ENCODE measurements at regions of chr20 and their contacts with region 1.

Region 1: GRCh38 chr20:10412591-10413408 is 21.2 kb downstream of the MKKS start:
- DNase-seq: peak; percentile 43 to 55
- ATAC-seq: peak; percentile 69 to 82; a peak in 5 of 6 replicates
- H3K4me3 ChIP-seq: no peak overlapping the region
- H3K27ac ChIP-seq: peak overlapping the region; percentile 63 to 82
- H3K4me1 ChIP-seq: peaks cover 83% of the 10 kb centered on the region
- CTCF ChIP-seq: peak; percentile 78
- EP300 ChIP-seq: no peak
- POLR2A ChIP-seq: no peak
- RAD21 ChIP-seq: peak; percentile 69 to 76

Region 2: GRCh38 chr20:10306440-10307358 is 106.1 kb before region 1 on chr20:
- CTCF ChIA-PET with region 1: interaction called, 10 read pairs
- POLR2A ChIA-PET with region 1: no interaction called
- DNase-seq: no peak
- ATAC-seq: peak in 1 of 2 experiments; percentile 56; a peak in 3 of 6 replicates
- H3K4me3 ChIP-seq: no peak overlapping the region
- H3K27ac ChIP-seq: peak overlapping the region; percentile 76 to 83
- H3K4me1 ChIP-seq: peaks cover 81% of the 10 kb centered on the region
- CTCF ChIP-seq: no peak
- EP300 ChIP-seq: peak; percentile 50 to 64; a peak in 2 of 5 replicates
- POLR2A ChIP-seq: no peak
- RAD21 ChIP-seq: 0 out of 5 replicates have a peak, but pooled peaks of 1 of the 2 experiments have one; percentile 18

Region 3: GRCh38 chr20:10369723-10370090 is 43.1 kb before region 1 on chr20:
- CTCF ChIA-PET with region 1: interaction called, 14 read pairs
- POLR2A ChIA-PET with region 1: interaction called, 8 read pairs
- DNase-seq: peak; percentile 82 to 95
- ATAC-seq: peak; percentile 90 to 95
- H3K4me3 ChIP-seq: no peak overlapping the region
- H3K27ac ChIP-seq: peak overlapping the region; percentile 90 to 93
- H3K4me1 ChIP-seq: peaks cover 55% of the 10 kb centered on the region
- CTCF ChIP-seq: no peak
- EP300 ChIP-seq: peak; percentile 83 to 90; a peak in 4 of 5 replicates
- POLR2A ChIP-seq: no peak
- RAD21 ChIP-seq: peak; percentile 6 to 52; a peak in 2 of 5 replicates

Region 4: DNA sequence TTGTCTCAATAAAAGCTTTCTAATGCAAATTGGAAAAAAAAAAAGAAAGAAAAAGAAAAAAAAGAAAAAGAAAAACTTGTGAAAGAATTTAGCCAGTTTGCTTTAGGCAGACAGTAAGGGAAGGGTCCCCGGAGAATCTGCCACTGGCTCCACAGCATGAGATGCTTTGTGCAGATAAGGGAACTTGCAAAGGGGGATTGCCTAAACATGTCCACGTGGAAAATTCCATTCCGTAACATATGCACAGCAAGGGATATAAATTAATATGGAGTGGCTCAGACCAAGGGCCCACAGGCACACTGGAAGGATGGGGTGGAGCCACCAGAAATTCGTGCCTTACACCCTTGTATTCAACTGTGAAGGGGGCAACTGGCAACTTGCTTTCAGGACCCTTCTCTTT is 24.2 kb before region 1 on chr20:
- CTCF ChIA-PET with region 1: interaction called, 10 read pairs
- POLR2A ChIA-PET with region 1: no interaction called
- DNase-seq: no peak
- ATAC-seq: no peak
- H3K4me3 ChIP-seq: no peak overlapping the region
- H3K27ac ChIP-seq: peak overlapping the region; percentile 19 to 66; a peak in 2 of 6 replicates
- H3K4me1 ChIP-seq: peaks cover 8% of the 10 kb centered on the region; the same call in 2 of the 3 replicates
- CTCF ChIP-seq: no peak
- EP300 ChIP-seq: no peak
- POLR2A ChIP-seq: no peak
- RAD21 ChIP-seq: no peak